HCT116 (cell line): ENCODE measurements at regions of chr9 and their contacts with region 1.

Region 1: DNA sequence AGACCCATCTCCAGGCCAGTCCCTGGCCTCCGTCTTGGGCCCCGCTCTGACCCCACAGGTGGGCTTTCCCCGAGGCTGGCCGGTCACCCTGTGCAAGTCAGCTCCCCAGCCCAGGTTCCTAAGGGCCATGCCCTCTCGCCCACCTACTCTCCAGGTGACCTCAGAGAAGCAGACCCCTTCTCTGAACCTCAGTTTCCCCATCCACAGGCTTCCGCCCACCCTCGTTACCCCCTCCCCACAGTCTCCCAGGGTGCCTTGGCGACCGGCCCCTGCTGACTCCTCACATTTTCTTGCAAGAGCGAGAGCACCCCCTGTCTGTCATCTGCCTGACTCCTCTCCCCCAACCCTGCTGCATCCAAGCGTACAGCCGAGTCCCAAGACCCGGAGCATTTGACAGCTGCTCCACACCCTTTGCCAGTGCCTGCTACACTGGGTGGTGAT is 51.2 kb upstream of the ORM1 start:
- DNase-seq: peak; percentile 28
- ATAC-seq: peak; percentile 88
- H3K4me3 ChIP-seq: no peak overlapping the region
- H3K27ac ChIP-seq: no peak overlapping the region
- H3K4me1 ChIP-seq: peaks cover under 1 to 4% of the 10 kb centered on the region in 2 experiments; a peak in 2 of 4 replicates
- H3K27me3 ChIP-seq: no peaks in the 10 kb centered on the region
- CTCF ChIP-seq: peak; percentile 49 to 68 (median 57); a peak in 5 of 6 replicates
- POLR2A ChIP-seq: no peak
- RAD21 ChIP-seq: peak; percentile 75

Region 2: DNA sequence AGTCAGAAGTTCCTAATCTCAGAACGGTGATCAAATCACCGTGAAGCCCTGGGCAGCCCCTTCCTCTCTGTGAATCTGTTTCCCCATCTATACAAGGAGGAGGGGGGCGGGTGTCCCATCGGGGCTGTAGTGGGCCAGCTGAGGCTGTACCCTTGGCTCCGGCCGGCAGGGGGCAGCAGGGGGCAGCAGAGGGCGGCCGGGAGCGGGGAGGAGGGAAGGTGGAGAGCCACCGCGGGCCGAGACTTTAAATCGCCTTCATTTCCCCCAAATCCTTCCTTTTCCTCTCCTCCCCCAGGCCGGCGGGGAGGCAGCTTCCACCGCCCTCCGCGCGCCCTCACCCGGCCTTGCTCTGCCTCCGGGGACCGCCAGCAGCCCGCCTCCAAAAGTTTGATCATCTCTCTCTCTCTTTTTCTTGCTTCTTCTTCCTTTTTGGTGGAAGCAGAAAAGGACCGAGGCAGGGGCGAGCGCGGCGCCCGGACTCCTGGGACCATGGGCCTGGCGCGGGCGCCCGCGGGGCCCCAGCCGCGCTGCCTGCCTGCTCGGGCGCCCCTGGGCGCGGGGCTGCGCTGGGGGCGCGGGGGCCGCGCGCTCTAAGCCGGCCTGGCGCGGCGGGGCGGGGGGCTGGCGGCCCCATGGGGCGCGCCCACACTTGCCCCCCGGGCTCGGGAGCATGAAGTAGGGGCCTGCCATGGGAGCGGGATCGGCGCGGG is 116.2 kb before region 1 on chr9 and contains the start of gene COL27A1:
- CTCF ChIA-PET with region 1: interaction called, 6 read pairs
- POLR2A ChIA-PET with region 1: no interaction called
- RAD21 ChIA-PET with region 1: interaction called in 1 of 2 experiments, 7 read pairs
- intact Hi-C with region 1: loop called (anchors 1 kb)
- DNase-seq: peak; percentile 19
- ATAC-seq: peak; percentile 92
- H3K4me3 ChIP-seq: peak within 1 kb of the TSS; percentile 54 to 62
- H3K27ac ChIP-seq: peak within 1 kb of the TSS; percentile 31; the same call in 1 of the 2 replicates
- H3K4me1 ChIP-seq: peaks cover 0 to 12% of the 10 kb centered on the region in 2 experiments; a peak in 3 of 4 replicates
- H3K27me3 ChIP-seq: no peaks in the 10 kb centered on the region
- CTCF ChIP-seq: peak; percentile 88 to 89 (median 88)
- POLR2A ChIP-seq: no peak
- RAD21 ChIP-seq: peak; percentile 85
- total RNA-seq, gene COL27A1: 12.0 TPM

Region 3: GRCh38 chr9:114430457-114430856 is 158.8 kb after region 1 on chr9:
- CTCF ChIA-PET with region 1: no interaction called
- POLR2A ChIA-PET with region 1: no interaction called
- RAD21 ChIA-PET with region 1: no interaction called
- intact Hi-C with region 1: no loop called
- DNase-seq: no peak
- ATAC-seq: no peak
- H3K4me3 ChIP-seq: no peak overlapping the region
- H3K27ac ChIP-seq: no peak overlapping the region
- H3K4me1 ChIP-seq: no peaks in the 10 kb centered on the region
- H3K27me3 ChIP-seq: no peaks in the 10 kb centered on the region
- CTCF ChIP-seq: no peak
- POLR2A ChIP-seq: no peak
- RAD21 ChIP-seq: no peak

Region 4: GRCh38 chr9:114538241-114538640 is 266.6 kb after region 1 on chr9:
- CTCF ChIA-PET with region 1: no interaction called
- POLR2A ChIA-PET with region 1: no interaction called
- RAD21 ChIA-PET with region 1: no interaction called
- intact Hi-C with region 1: no loop called
- DNase-seq: peak; percentile 88
- ATAC-seq: peak; percentile 100
- H3K4me3 ChIP-seq: no peak overlapping the region
- H3K27ac ChIP-seq: no peak overlapping the region
- H3K4me1 ChIP-seq: peaks cover 4 to 13% of the 10 kb centered on the region in 2 experiments; a peak in 3 of 4 replicates
- H3K27me3 ChIP-seq: no peaks in the 10 kb centered on the region
- CTCF ChIP-seq: peak; percentile 26 to 55 (median 54); a peak in 4 of 6 replicates
- POLR2A ChIP-seq: peak; percentile 38
- RAD21 ChIP-seq: peak; percentile 74